Left colon (tissue), 2 donors: ENCODE measurements at regions of chr3 and their contacts with region 1.

Region 1: GRCh38 chr3:146326670-146327543 is 76.0 kb upstream of the PLSCR4 start:
- DNase-seq: peak in 1 of 2 donors; percentile 59
- ATAC-seq: peak; percentile 87

Region 2: GRCh38 chr3:146218880-146219866 is 107.7 kb before region 1 on chr3:
- intact Hi-C with region 1: loop called in 1 of 2 experiments (anchors 5 kb)
- DNase-seq: peak in 1 of 2 donors; percentile 40
- ATAC-seq: no peak

Region 3: GRCh38 chr3:146605106-146605505 is 278.2 kb after region 1 on chr3 and contains the start of gene PLSCR5:
- intact Hi-C with region 1: no loop called
- DNase-seq: no peak
- ATAC-seq: no peak
- total RNA-seq, gene PLSCR5: not detected